ENCODE measurements at regions of chr18 and their contacts with region 1.

Region 1: GRCh38 chr18:74389171-74389927 is 67.8 kb downstream of the DIPK1C start:
- DNase-seq: no peak
- H3K4me3 Mint-ChIP-seq: no peak overlapping the region
- H3K27ac Mint-ChIP-seq: no peak overlapping the region
- H3K4me1 Mint-ChIP-seq: peaks cover 30% of the 10 kb centered on the region
- H3K27me3 Mint-ChIP-seq: peaks cover 38% of the 10 kb centered on the region

Region 2: GRCh38 chr18:74378179-74378682 is 11.1 kb before region 1 on chr18:
- CTCF ChIA-PET with region 1: interaction called, 10 read pairs
- DNase-seq: peak; percentile 66
- H3K4me3 Mint-ChIP-seq: peak overlapping the region; percentile 41
- H3K27ac Mint-ChIP-seq: peak overlapping the region; percentile 95
- H3K4me1 Mint-ChIP-seq: peaks cover 64% of the 10 kb centered on the region
- H3K27me3 Mint-ChIP-seq: peaks cover 16% of the 10 kb centered on the region

Measured in activated naive CD4-positive, alpha-beta T cell treated with anti-CD3 and anti-CD28 coated beads, Interleukin-2, amount 10 ng/mL, durations not matched to agents 7 days and 5 days (primary cell).